ENCODE measurements at regions of chr2 and their contacts with region 1.

Region 1: GRCh38 chr2:78245394-78246140 is 723.4 kb upstream of the LRRTM4 start:
- DNase-seq: no peak
- ATAC-seq: no peak
- H3K4me3 ChIP-seq: no peak overlapping the region
- H3K4me3 Mint-ChIP-seq: no peak overlapping the region
- H3K27ac ChIP-seq: no peak overlapping the region
- H3K27ac Mint-ChIP-seq: no peak overlapping the region
- H3K4me1 ChIP-seq: no peaks in the 10 kb centered on the region
- H3K4me1 Mint-ChIP-seq: no peaks in the 10 kb centered on the region
- H3K27me3 ChIP-seq: no peaks in the 10 kb centered on the region
- H3K27me3 Mint-ChIP-seq: no peaks in the 10 kb centered on the region

Region 2: DNA sequence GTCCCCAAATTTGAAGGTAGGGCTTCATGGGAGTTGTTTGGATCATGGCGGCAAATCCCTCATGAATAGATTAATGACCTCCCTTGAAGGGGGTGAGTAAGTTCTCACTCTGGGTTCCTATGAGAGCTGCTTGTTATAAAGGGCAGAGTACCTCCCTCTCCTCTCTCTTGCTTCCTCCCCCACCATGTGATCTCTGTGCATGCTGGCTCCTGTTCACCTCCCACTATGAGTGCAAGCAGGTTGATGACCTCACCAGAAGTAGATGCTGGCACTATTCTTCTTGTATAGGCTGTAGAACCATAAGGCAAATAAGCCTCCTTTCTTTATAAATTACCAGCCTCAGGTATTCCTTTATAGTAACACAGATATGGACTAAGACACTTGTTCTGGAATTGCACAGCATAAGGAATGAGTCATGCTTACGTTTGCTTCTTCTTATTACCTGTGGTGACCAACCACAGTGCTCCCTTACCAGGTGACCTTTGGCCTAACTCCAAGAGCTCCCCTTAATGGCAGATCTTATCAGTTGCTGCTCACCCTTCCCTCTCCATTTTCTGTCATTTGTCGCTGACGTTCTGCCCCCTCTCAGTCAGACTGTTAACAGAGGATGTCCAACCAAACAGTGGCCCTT is 1975.4 kb before region 1 on chr2:
- CTCF ChIA-PET with region 1: no interaction called
- POLR2A ChIA-PET with region 1: no interaction called
- intact Hi-C with region 1: loop called in 1 of 2 experiments (anchors 5 kb)
- DNase-seq: no peak
- ATAC-seq: no peak
- H3K4me3 ChIP-seq: no peak overlapping the region
- H3K4me3 Mint-ChIP-seq: no peak overlapping the region
- H3K27ac ChIP-seq: no peak overlapping the region
- H3K27ac Mint-ChIP-seq: no peak overlapping the region
- H3K4me1 ChIP-seq: no peaks in the 10 kb centered on the region
- H3K4me1 Mint-ChIP-seq: no peaks in the 10 kb centered on the region
- H3K27me3 ChIP-seq: no peaks in the 10 kb centered on the region
- H3K27me3 Mint-ChIP-seq: no peaks in the 10 kb centered on the region

Region 3: DNA sequence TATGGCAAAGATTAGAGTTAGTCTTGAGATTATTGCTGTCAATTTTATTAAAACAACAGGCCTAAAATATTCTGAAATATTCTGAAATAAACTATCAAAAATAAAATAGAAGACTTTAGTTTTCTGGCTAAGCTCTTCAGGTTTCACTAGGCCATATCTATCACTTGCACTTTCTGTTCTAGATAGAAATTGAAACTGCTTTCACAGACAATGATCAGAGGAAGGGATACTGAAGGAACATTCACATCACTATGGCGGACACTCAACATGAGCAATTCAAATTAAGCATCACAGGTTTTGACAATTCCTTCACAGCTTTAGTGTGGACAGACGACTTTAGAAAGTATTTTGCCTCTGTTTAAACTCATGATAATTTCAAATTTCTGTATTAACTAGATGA is 193.6 kb after region 1 on chr2:
- CTCF ChIA-PET with region 1: no interaction called
- POLR2A ChIA-PET with region 1: no interaction called
- intact Hi-C with region 1: no loop called
- DNase-seq: no peak
- ATAC-seq: no peak
- H3K4me3 ChIP-seq: no peak overlapping the region
- H3K4me3 Mint-ChIP-seq: no peak overlapping the region
- H3K27ac ChIP-seq: no peak overlapping the region
- H3K27ac Mint-ChIP-seq: no peak overlapping the region
- H3K4me1 ChIP-seq: no peaks in the 10 kb centered on the region
- H3K4me1 Mint-ChIP-seq: no peaks in the 10 kb centered on the region
- H3K27me3 ChIP-seq: no peaks in the 10 kb centered on the region
- H3K27me3 Mint-ChIP-seq: no peaks in the 10 kb centered on the region

Region 4: DNA sequence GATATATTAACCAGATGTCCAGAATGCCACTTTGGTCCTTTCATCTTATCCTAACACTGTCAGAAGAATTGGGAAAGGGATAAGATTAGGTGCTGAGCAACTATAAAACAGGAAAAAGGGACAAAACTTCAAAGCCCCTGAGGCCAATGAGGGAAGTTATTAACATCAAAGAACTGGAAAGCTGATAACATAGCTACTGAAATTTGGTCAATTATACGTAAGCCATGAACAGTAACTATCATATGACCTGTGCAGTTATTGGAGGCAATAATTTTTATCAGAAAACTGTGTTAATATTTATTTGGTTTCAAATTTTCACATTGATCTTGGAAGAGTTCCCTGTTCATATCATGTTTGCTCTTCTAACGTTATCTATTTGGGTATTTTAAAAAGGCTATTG is 916.6 kb after region 1 on chr2:
- CTCF ChIA-PET with region 1: no interaction called
- POLR2A ChIA-PET with region 1: no interaction called
- intact Hi-C with region 1: no loop called
- DNase-seq: no peak
- ATAC-seq: no peak
- H3K4me3 ChIP-seq: no peak overlapping the region
- H3K4me3 Mint-ChIP-seq: no peak overlapping the region
- H3K27ac ChIP-seq: no peak overlapping the region
- H3K27ac Mint-ChIP-seq: no peak overlapping the region
- H3K4me1 ChIP-seq: no peaks in the 10 kb centered on the region
- H3K4me1 Mint-ChIP-seq: no peaks in the 10 kb centered on the region
- H3K27me3 ChIP-seq: no peaks in the 10 kb centered on the region
- H3K27me3 Mint-ChIP-seq: no peaks in the 10 kb centered on the region